ENCODE measurements at regions of chr4 and their contacts with region 1.

Region 1: GRCh38 chr4:38034986-38035882 is 75.0 kb downstream of the PTTG2 start:
- DNase-seq: no peak
- ATAC-seq: peak; percentile 45

Region 2: DNA sequence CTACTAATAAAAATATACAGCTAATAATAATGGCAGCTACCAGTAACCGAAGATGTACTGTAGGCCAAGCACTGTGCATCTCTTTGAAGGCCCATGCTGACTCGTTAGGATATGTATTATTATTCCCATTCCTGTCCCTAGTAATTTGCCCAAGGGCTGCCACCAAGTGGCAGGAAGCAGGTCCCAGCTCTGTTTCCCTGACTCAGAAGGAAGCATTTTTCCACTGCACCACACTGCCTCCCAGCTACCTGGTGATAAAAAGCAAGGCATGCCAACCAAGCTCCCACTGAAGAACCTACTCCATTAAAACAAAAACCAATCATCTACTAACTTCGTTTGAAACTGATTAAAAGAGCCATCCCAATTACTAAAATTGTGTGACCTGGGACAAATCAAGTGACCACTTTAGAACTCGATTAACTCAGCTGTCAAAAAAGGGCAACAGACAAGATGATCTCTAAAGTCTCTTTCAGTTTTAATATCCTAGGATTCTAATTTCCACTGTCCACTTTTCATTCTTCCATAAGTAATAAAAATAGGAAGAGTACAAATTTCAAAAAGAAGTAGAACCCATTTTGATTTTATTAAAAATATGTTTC is 233.1 kb before region 1 on chr4:
- intact Hi-C with region 1: loop called (anchors 10 kb)
- DNase-seq: no peak
- ATAC-seq: peak; percentile 56